ENCODE measurements at regions of chr22 and their contacts with region 1.

Region 1: DNA sequence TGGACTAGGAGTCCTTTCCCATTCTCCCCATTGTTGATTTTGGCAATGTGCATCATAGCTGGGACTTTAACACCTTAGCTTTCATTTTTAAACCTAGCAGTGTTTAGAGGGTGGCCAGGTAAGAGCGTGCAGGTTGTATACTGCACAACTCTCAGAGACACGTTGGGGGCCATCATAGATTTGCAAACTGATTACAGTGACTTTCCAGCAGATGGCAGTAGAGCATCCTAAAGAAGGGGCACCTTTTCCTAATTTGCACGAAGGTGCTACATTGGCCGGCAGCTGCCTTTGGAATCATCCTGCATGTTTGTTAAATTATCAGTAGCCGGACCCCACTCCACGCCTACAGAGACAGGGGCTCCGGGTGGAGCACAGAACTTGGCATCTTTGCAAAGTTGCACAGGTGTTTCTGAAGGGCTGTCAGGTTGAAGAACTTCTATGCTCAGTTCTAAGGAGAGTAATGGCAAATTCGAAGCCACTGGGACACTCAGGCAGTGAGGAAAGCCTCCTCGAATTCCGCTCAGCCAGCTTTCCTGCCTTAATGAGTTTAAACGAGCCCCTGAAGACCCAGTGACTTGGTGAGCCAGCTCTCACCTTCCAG is 7.7 kb downstream of the LHFPL7 start:
- DNase-seq: peak; percentile 48
- H3K4me3 ChIP-seq: no peak overlapping the region
- H3K27ac ChIP-seq: no peak overlapping the region
- H3K4me1 ChIP-seq: peaks cover 17% of the 10 kb centered on the region
- H3K27me3 ChIP-seq: no peaks in the 10 kb centered on the region
- CTCF ChIP-seq: peak; percentile 70 to 76

Region 2: DNA sequence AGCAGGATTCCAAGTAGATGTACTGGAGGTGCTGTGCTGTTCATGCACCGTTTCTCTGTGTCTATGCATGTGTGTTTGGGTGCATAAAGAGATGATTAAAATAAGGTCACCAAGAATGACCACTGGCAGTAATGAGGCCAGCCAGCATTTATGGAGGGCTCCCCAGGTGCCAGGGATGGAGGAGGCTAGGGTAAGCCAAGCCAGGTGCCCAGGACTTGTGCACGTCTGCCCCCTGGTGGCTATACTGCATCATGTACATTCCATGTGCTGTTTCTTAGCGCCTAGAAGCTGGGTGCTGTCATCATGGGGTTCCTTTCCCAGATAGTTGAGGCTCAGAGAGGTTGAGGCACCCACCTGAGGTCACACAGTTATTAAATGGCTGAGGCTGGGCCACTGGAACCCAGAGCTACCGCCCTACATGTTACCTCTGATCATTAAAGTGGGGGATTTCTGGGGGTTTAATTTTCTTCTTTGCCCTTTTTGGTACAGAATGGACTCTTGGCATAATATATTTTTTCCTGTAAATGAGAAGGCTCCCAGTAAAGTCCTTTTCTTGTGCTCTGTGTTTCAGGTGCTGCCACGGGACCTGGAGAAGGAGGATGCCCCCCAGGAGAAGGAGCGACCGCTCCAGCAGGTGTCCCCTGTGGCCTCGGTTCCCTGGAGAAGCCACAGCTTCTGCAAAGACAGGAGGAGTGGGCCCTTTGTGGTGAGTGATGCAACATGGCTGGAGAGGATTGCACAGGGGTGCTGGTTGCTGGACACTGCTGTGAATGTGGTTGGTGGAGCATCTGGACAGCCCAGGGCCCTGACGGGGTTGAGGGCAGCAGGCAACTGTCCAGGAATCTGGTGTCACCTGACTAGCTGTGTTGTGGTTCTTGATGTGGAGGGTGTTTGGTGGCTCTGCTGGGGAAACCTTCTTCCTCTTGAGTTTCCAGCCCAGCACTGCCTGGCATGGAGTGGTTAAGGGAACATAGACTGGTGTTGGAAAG is 110.1 kb after region 1 on chr22:
- CTCF ChIA-PET with region 1: interaction called, 4 read pairs
- dilution Hi-C with region 1: no loop called
- in situ Hi-C with region 1: no loop called
- intact Hi-C with region 1: loop called (anchors 1 kb)
- DNase-seq: peak; percentile 45
- H3K4me3 ChIP-seq: no peak overlapping the region
- H3K27ac ChIP-seq: no peak overlapping the region
- H3K4me1 ChIP-seq: no peaks in the 10 kb centered on the region
- H3K27me3 ChIP-seq: no peaks in the 10 kb centered on the region
- CTCF ChIP-seq: peak; percentile 84 to 94

Region 3: DNA sequence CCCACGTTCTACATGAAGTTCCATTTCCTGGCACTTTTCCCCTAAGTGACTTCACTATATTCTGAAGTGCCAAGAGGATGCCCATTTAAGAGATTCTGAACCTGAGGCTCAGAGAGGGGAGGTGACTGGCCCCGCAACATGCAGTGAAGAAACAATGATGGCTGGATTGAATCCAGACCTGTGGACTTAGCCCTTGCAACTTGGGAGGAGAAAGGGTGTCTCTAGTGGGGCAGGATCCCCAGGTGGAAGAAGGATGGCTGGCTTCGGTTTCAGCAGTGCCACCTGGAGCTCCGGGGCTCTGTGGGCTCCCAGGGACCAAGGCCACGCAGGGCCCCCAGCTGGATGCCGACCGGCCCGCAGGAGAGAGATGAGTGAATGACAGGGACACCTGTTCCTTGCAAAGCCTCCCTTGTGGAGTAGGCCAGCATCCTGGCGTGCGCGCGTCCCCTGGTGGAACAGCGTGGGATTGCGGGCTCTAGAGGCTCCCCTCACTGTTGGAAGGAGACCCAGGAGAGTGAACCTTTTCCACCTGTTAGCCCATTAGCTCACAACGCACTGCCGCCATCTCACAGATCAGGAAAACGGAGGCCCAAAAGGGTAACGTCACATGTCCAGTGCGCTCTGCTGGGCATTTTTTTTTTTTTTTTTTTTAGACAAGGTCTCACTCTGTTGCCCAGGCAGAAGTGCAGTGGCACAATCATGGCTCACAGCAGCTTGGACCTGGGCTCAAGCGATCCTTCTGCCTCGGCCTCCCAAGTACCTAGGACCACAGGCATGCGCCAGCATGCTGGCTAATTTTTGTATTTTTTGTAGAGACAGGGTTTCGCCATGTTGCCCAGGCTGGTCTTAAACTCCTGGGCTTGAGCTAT is 118.4 kb after region 1 on chr22:
- CTCF ChIA-PET with region 1: no interaction called
- dilution Hi-C with region 1: no loop called
- in situ Hi-C with region 1: no loop called
- intact Hi-C with region 1: loop called (anchors 1 kb)
- DNase-seq: peak; percentile 30
- H3K4me3 ChIP-seq: no peak overlapping the region
- H3K27ac ChIP-seq: no peak overlapping the region
- H3K4me1 ChIP-seq: peaks cover 9% of the 10 kb centered on the region
- H3K27me3 ChIP-seq: no peaks in the 10 kb centered on the region
- CTCF ChIP-seq: peak; percentile 90 to 92

Region 4: GRCh38 chr22:25176175-25176574 is 237.3 kb after region 1 on chr22:
- CTCF ChIA-PET with region 1: no interaction called
- dilution Hi-C with region 1: no loop called
- in situ Hi-C with region 1: no loop called
- intact Hi-C with region 1: no loop called
- DNase-seq: peak; percentile 88
- H3K4me3 ChIP-seq: no peak overlapping the region
- H3K27ac ChIP-seq: peak overlapping the region; percentile 38
- H3K4me1 ChIP-seq: peaks cover 18% of the 10 kb centered on the region
- H3K27me3 ChIP-seq: no peaks in the 10 kb centered on the region
- CTCF ChIP-seq: no peak

Measured in mammary epithelial cell (primary cell).